Tibial artery (tissue), 4 donors: ENCODE measurements at regions of chr1 and their contacts with region 1.

Region 1: GRCh38 chr1:46940307-46940706 is 969 bp downstream of the CYP4A11 start:
- DNase-seq: no peak
- H3K4me3 ChIP-seq: no peak overlapping the region
- H3K27ac ChIP-seq: no peak overlapping the region
- H3K4me1 ChIP-seq: no peaks in the 10 kb centered on the region
- H3K27me3 ChIP-seq: no peaks in the 10 kb centered on the region
- CTCF ChIP-seq: no peak

Region 2: DNA sequence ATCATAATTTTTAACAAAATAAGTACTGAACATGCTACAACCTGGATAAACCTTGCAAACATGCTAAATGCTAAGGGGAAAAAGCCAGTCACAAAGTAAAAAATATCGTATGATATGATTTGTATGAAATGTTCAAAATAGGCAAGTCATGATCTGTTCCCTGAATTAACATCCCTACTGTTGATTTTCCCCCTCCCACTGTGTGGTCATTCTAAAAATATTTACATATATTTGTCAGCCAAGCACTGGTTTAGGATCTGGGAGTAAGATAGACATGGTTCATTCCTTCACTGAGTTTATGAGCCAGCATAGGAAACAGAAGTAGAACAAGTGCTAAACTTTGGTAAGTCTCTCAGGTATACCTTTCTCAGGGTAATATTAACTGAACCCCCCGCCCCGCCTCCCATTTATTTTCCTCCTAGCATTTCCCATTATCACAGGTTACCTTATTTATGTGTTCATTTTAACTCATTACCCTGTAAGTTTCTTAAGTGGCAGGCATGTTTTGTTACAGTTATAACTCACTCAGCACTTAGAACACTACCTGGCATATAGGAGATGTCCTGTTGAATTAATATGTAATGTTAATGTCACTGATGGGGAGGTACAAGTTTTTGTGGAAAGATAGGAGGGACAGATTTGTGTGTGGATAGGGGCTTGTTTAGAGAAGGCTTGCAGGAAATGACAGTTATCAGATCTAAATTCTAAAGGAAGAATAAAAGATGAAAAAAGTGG is 624.5 kb before region 1 on chr1:
- intact Hi-C with region 1: no loop called
- DNase-seq: no peak
- H3K4me3 ChIP-seq: no peak overlapping the region
- H3K27ac ChIP-seq: peak overlapping the region; percentile 2 to 17
- H3K4me1 ChIP-seq: peaks cover 0 to 13% (median 3%) of the 10 kb centered on the region in 4 donors
- H3K27me3 ChIP-seq: no peaks in the 10 kb centered on the region
- CTCF ChIP-seq: no peak

Region 3: GRCh38 chr1:46798810-46799209 is 141.5 kb before region 1 on chr1 and contains the start of gene CYP4B1:
- intact Hi-C with region 1: no loop called
- DNase-seq: peak; percentile 81 to 89
- H3K4me3 ChIP-seq: peak within 1 kb of the TSS; percentile 33 to 35
- H3K27ac ChIP-seq: no peak within 1 kb of the TSS
- H3K4me1 ChIP-seq: peaks cover 0 to 9% (median 0%) of the 10 kb centered on the region in 4 donors
- H3K27me3 ChIP-seq: peaks cover 0 to 2% of the 10 kb centered on the region in 2 donors
- CTCF ChIP-seq: no peak

Region 4: DNA sequence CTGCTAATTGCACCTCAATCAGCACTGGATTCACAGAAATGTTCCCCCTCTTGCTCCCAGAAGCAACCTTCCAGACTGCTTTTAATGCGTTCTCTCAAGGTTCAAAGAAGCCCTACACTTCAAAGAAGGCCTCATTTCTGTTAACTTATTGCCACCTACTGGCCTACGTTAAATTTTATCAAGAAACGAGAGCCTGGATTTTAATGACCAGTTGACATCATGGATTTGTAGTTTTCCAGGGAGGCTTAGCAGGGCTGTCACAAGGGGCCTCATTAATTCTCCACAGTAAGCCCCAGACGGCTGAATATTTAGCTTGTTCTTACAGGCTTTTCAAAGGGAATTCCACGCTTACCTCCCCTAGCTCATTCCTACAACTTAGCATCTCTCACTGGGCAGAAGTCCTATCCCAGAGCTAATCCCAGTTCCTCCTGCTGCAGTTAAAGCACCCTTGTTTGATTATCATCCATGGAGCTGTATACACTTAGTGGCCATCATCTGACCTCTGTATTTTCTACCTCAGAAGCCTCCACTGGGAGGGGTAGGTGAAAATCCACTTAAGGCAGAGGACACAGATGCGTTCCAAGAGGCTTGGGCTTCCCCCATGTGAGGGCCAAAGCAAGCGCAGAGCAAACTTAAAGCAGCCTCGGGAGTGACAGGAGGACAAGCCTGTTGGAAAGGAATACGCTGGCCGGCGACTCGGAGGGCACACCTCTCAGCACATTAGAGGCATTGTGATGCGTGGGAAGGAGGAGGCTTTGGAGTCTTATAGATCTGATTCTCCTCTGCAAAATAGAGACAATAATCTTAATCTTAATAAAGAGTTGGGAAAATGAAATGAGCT is 51.0 kb after region 1 on chr1:
- intact Hi-C with region 1: no loop called
- DNase-seq: no peak
- H3K4me3 ChIP-seq: no peak overlapping the region
- H3K27ac ChIP-seq: no peak overlapping the region
- H3K4me1 ChIP-seq: no peaks in the 10 kb centered on the region
- H3K27me3 ChIP-seq: no peaks in the 10 kb centered on the region
- CTCF ChIP-seq: peak in 1 of 2 experiments; percentile 6

Region 5: GRCh38 chr1:47137925-47138615 is 197.8 kb after region 1 on chr1:
- intact Hi-C with region 1: loop called (anchors 5 kb)
- DNase-seq: no peak
- H3K4me3 ChIP-seq: no peak overlapping the region
- H3K27ac ChIP-seq: no peak overlapping the region
- H3K4me1 ChIP-seq: no peaks in the 10 kb centered on the region
- H3K27me3 ChIP-seq: no peaks in the 10 kb centered on the region
- CTCF ChIP-seq: no peak